ENCODE measurements at regions of chr1 and their contacts with region 1.

Region 1: DNA sequence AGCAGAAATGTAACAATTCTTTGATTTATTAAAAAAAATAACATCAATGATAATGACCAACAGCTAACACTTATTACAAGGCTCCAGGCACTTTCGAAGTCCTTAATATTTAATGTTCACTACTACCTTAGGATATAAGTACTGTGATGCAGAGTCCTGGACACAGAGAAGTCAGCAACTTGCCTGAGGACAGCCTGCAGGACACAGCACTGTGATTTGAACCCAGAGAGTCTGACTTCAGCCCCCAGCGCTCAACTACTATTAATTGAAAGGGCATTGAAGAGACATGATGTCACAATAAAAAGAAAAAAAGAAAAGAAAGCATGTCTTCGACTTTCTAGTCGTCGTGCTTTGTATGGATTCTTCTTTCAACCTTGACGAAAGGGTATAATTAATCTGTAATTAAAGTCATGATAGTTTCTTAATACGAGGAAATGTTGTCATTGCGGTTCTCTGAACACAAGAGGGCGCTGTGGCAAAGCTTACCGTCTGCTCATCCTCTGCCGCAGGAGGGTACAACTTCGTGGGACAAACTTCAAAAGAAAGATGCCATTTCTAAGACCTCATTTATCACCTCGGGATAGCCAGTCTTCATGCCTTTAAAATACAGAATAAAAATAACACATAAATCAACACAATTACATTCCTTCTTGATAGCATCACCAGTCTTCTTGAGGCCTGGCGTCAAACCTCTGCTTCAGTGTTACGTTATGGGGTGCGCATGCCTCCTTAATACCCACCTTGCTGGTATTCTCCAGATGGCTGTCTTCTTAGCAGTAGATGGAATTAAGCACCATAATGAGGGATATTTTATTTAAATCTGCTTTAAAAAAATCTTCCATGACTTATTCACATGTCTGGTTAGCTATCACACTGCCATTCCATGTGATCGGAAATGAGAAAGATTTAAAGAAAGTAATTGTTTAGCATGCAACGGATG is 240.1 kb downstream of the DISC1 start:
- DNase-seq: peak; percentile 89
- H3K4me3 Mint-ChIP-seq: no peak overlapping the region
- H3K27ac Mint-ChIP-seq: peak overlapping the region; percentile 60
- H3K4me1 Mint-ChIP-seq: peaks cover 20% of the 10 kb centered on the region
- H3K27me3 Mint-ChIP-seq: no peaks in the 10 kb centered on the region
- CTCF ChIP-seq: peak; percentile 100

Region 2: GRCh38 chr1:231322880-231323530 is 543.7 kb before region 1 on chr1:
- CTCF ChIA-PET with region 1: no interaction called
- POLR2A ChIA-PET with region 1: no interaction called
- intact Hi-C with region 1: no loop called
- DNase-seq: no peak
- H3K4me3 Mint-ChIP-seq: no peak overlapping the region
- H3K27ac Mint-ChIP-seq: no peak overlapping the region
- H3K4me1 Mint-ChIP-seq: no peaks in the 10 kb centered on the region
- H3K27me3 Mint-ChIP-seq: no peaks in the 10 kb centered on the region
- CTCF ChIP-seq: no peak

Region 3: DNA sequence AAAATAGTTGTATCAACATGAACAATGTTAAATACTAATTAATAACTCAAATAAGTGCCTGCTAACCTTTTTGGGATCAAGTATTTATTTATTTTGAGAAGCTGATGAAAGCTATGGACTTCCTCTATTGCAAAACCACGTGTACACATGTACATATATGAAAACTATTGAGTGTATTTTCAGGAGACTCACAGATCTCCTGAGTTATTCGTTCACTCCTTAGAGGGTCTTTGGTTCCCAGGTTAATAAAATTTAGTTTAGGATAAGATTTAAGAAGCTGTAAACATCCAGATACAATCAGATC is 109.6 kb before region 1 on chr1:
- CTCF ChIA-PET with region 1: interaction called, 25 read pairs
- POLR2A ChIA-PET with region 1: interaction called, 5 read pairs
- intact Hi-C with region 1: loop called (anchors 1 kb)
- DNase-seq: no peak
- H3K4me3 Mint-ChIP-seq: no peak overlapping the region
- H3K27ac Mint-ChIP-seq: peak overlapping the region; percentile 57
- H3K4me1 Mint-ChIP-seq: no peaks in the 10 kb centered on the region
- H3K27me3 Mint-ChIP-seq: no peaks in the 10 kb centered on the region
- CTCF ChIP-seq: no peak

Region 4: DNA sequence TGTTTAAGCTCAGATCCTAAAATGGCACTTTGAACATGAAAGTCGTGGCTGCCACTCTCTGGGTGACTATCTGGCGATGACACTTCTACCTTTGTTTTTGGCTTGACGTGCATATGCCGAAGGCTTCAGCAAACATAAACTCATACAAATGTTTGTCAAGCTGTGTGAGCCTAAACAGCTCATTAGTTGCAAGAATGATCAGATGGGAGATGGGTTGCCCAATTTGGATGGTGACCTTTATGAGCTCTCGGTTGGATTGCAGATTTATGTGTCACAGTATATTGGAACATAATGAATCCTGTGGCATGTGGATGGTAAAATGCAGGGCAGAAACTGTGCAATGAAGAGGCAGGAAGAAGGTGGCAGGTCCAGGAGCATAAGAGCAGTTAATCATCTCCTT is 10.7 kb before region 1 on chr1:
- CTCF ChIA-PET with region 1: interaction called, 21 read pairs
- POLR2A ChIA-PET with region 1: interaction called, 3 read pairs
- intact Hi-C with region 1: no loop called
- DNase-seq: no peak
- H3K4me3 Mint-ChIP-seq: no peak overlapping the region
- H3K27ac Mint-ChIP-seq: no peak overlapping the region
- H3K4me1 Mint-ChIP-seq: no peaks in the 10 kb centered on the region
- H3K27me3 Mint-ChIP-seq: no peaks in the 10 kb centered on the region
- CTCF ChIP-seq: no peak

Region 5: DNA sequence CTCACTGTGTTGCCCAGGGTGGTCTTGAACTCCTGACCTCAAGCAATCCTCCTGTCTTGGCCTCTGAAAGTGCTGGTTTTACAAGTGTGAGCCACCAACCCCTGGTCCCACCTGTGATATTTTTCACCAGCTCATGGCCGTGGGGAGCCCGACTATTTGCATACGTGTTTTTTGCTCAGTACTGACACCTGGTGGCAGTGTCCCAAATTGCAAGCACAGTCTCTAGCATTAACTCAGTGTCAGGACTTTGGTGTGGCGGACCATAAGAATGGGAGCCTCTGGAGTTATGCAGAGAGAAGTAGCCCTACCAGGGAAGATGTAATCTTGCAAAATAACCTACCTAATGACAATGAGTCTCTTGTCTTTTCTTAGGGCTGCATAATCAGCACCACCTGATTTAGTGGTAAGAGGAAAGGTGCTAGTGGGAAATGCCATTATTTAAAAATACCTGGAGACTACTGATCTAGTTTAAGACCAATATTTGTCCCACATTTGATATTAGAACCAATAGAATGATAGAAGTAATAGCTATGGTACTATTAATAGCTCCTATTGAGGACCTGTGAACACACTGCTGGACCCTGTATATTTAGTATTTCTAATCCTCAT is 65.3 kb after region 1 on chr1:
- CTCF ChIA-PET with region 1: interaction called, 11 read pairs
- POLR2A ChIA-PET with region 1: no interaction called
- intact Hi-C with region 1: no loop called
- DNase-seq: peak; percentile 58
- H3K4me3 Mint-ChIP-seq: no peak overlapping the region
- H3K27ac Mint-ChIP-seq: no peak overlapping the region
- H3K4me1 Mint-ChIP-seq: peaks cover 36% of the 10 kb centered on the region
- H3K27me3 Mint-ChIP-seq: no peaks in the 10 kb centered on the region
- CTCF ChIP-seq: peak; percentile 90

Region 6: DNA sequence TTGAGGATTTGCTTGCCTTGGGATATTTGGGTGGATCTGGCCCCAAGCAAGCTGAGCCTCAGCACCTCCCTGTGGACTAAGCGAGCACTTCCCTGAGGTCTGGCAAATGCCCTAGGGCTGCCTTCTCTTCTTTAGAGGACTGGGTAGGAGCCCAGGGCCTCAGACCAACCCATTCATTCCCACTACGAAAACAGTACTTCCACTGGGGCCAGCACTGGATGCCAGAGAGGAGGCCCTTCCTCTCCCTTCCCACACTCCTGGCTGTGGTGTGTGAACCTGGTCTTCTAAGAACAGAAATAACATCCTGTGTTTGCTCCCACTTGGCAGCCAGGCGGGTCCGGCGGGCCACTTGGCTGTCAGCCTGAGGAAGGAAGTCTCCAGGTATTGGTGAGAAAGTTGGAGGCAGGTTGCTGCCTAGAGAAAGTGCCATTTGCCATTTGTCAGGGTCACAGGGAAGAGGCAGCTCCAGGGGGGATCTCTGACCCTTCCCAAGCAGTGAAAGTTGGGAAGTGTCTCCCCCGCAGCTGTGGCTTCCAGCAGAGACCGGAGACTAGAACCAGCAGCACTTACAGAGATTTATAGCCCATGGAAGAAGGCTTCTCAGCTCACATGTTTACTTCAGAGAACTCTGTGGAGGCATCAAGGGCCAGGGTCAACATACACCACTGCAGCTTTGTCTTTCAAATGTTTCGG is 439.8 kb after region 1 on chr1:
- CTCF ChIA-PET with region 1: interaction called, 4 read pairs
- POLR2A ChIA-PET with region 1: no interaction called
- intact Hi-C with region 1: loop called (anchors 5 kb)
- DNase-seq: peak; percentile 42
- H3K4me3 Mint-ChIP-seq: no peak overlapping the region
- H3K27ac Mint-ChIP-seq: no peak overlapping the region
- H3K4me1 Mint-ChIP-seq: peaks cover 16% of the 10 kb centered on the region
- H3K27me3 Mint-ChIP-seq: no peaks in the 10 kb centered on the region
- CTCF ChIP-seq: peak; percentile 17

Region 7: GRCh38 chr1:232528472-232529089 is 661.9 kb after region 1 on chr1:
- CTCF ChIA-PET with region 1: interaction called, 5 read pairs
- POLR2A ChIA-PET with region 1: interaction called, 3 read pairs
- intact Hi-C with region 1: loop called (anchors 1 kb)
- DNase-seq: no peak
- H3K4me3 Mint-ChIP-seq: no peak overlapping the region
- H3K27ac Mint-ChIP-seq: peak overlapping the region; percentile 78
- H3K4me1 Mint-ChIP-seq: peaks cover 52% of the 10 kb centered on the region
- H3K27me3 Mint-ChIP-seq: no peaks in the 10 kb centered on the region
- CTCF ChIP-seq: no peak

Measured in MCF 10A (cell line).